ENCODE measurements at regions of chr17 and their contacts with region 1.

Region 1: GRCh38 chr17:56715613-56716357 is 117.9 kb downstream of the C17orf67 start:
- DNase-seq: peak; percentile 52 to 64 (median 60)
- H3K4me3 ChIP-seq: no peak overlapping the region
- H3K4me3 Mint-ChIP-seq: no peak overlapping the region
- H3K27ac ChIP-seq: no peak overlapping the region
- H3K27ac Mint-ChIP-seq: no peak overlapping the region
- H3K4me1 ChIP-seq: no peaks in the 10 kb centered on the region
- H3K4me1 Mint-ChIP-seq: peaks cover 0 to 5% (median 3%) of the 10 kb centered on the region in 4 donors
- H3K27me3 ChIP-seq: no peaks in the 10 kb centered on the region
- H3K27me3 Mint-ChIP-seq: peaks cover 2 to 4% of the 10 kb centered on the region in 2 donors

Region 2: GRCh38 chr17:56499799-56500388 is 215.9 kb before region 1 on chr17:
- CTCF ChIA-PET with region 1: interaction called, 11 read pairs
- POLR2A ChIA-PET with region 1: interaction called, 3 read pairs
- intact Hi-C with region 1: loop called (anchors 1 kb)
- DNase-seq: peak in 1 of 5 donors; percentile 2
- H3K4me3 ChIP-seq: no peak overlapping the region
- H3K4me3 Mint-ChIP-seq: no peak overlapping the region
- H3K27ac ChIP-seq: no peak overlapping the region
- H3K27ac Mint-ChIP-seq: no peak overlapping the region
- H3K4me1 ChIP-seq: no peaks in the 10 kb centered on the region
- H3K4me1 Mint-ChIP-seq: peaks cover 0 to 1% (median 0%) of the 10 kb centered on the region in 4 donors
- H3K27me3 ChIP-seq: no peaks in the 10 kb centered on the region
- H3K27me3 Mint-ChIP-seq: peaks cover 2 to 3% of the 10 kb centered on the region in 2 donors

Region 3: GRCh38 chr17:56653877-56654276 is 61.9 kb before region 1 on chr17:
- CTCF ChIA-PET with region 1: interaction called, 5 read pairs
- POLR2A ChIA-PET with region 1: no interaction called
- intact Hi-C with region 1: loop called (anchors 1 kb)
- DNase-seq: peak; percentile 50 to 66 (median 55)
- H3K4me3 ChIP-seq: no peak overlapping the region
- H3K4me3 Mint-ChIP-seq: peak overlapping the region in 1 of 8 donors; percentile 44
- H3K27ac ChIP-seq: no peak overlapping the region
- H3K27ac Mint-ChIP-seq: peak overlapping the region in 1 of 7 donors; percentile 34
- H3K4me1 ChIP-seq: no peaks in the 10 kb centered on the region
- H3K4me1 Mint-ChIP-seq: peaks cover 0 to 2% (median under 1%) of the 10 kb centered on the region in 4 donors
- H3K27me3 ChIP-seq: no peaks in the 10 kb centered on the region
- H3K27me3 Mint-ChIP-seq: peaks cover 2 to 12% of the 10 kb centered on the region in 2 donors

Region 4: DNA sequence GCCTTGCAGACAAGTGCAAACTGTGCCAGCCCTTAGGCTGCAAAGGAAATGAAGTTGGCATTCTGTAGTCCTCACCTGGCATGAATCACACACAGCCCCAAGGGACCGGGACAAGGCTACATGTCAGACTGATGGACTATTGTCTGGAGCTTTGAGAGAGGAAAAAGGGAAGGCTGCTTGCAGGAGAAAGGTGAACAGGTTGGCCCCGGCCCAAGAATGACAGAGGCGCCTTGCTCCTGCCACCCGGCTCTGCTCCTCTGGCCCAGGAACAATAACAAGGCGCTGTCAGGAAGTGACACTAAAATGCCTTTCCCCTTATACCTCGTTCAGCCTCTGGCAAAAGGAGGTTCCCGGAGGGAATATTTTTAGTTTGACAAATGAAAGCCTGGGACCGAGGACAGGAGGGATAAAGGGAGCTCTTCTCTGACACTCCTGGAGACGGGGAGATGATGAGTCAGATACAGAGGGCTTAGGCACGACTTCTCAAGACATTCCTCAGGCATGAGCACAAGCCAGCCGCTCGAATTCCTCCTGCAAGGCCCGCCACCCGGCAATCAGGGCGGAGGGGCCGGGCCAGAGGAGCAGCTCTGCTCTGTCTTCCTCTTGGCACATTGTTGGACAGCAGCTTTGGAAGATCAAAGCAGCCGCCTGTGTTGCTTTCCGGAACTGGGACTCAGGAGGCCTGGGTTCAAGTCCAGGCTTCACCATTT is 16.4 kb before region 1 on chr17:
- CTCF ChIA-PET with region 1: interaction called, 13 read pairs
- POLR2A ChIA-PET with region 1: no interaction called
- intact Hi-C with region 1: no loop called
- DNase-seq: no peak
- H3K4me3 ChIP-seq: no peak overlapping the region
- H3K4me3 Mint-ChIP-seq: no peak overlapping the region
- H3K27ac ChIP-seq: no peak overlapping the region
- H3K27ac Mint-ChIP-seq: no peak overlapping the region
- H3K4me1 ChIP-seq: no peaks in the 10 kb centered on the region
- H3K4me1 Mint-ChIP-seq: no peaks in the 10 kb centered on the region
- H3K27me3 ChIP-seq: no peaks in the 10 kb centered on the region
- H3K27me3 Mint-ChIP-seq: peaks cover 2 to 16% of the 10 kb centered on the region in 2 donors

Region 5: DNA sequence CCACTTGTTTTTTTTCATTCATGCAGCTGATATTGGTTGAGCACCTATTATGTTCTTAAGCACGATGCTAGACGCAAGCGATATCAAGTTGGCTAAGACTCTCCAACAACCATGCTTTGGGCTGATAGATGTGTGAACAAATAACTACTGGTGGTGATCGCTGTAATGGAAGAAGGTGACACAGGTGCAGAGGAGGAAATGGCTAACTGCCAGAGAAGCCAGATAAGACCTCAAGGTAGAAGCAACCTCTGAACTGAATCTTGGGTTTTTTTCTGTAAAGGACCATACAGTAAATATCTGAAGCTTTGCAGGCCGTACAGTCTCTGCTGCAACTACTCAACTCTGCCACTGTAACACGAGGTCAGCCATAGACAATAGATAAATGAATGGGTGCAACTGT is 20.1 kb after region 1 on chr17:
- CTCF ChIA-PET with region 1: interaction called, 10 read pairs
- POLR2A ChIA-PET with region 1: no interaction called
- intact Hi-C with region 1: no loop called
- DNase-seq: no peak
- H3K4me3 ChIP-seq: no peak overlapping the region
- H3K4me3 Mint-ChIP-seq: no peak overlapping the region
- H3K27ac ChIP-seq: no peak overlapping the region
- H3K27ac Mint-ChIP-seq: no peak overlapping the region
- H3K4me1 ChIP-seq: no peaks in the 10 kb centered on the region
- H3K4me1 Mint-ChIP-seq: no peaks in the 10 kb centered on the region
- H3K27me3 ChIP-seq: no peaks in the 10 kb centered on the region
- H3K27me3 Mint-ChIP-seq: peaks cover 3 to 17% of the 10 kb centered on the region in 2 donors

Measured in CD4-positive, alpha-beta memory T cell (primary cell).